Posterior vena cava (tissue), 2 donors: ENCODE measurements at regions of chr13 and their contacts with region 1.

Region 1: GRCh38 chr13:88637935-88638334 is 966.8 kb downstream of the SLITRK5 start:
- DNase-seq: no peak

Region 2: DNA sequence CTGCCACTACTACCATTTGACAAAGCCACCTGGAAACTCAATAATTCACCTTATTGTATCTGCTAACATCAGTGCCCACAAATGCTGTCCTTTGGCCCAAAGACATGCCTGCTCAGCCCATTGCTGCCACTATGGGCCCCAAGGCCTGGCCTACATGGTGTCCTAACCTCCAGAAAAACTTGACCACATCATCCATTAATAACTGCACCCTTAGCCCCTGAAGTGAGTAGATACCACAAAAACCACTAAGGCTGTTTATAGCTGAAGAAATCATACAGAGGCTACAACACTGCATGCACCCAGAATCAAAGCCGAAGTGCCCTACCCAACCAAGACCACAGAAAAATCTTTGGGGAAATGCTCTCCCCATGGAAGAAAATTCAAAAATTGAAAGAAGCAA is 1905.9 kb before region 1 on chr13:
- intact Hi-C with region 1: loop called in 1 of 2 experiments (anchors 5 kb)
- DNase-seq: no peak

Region 3: GRCh38 chr13:88565566-88565965 is 72.4 kb before region 1 on chr13:
- intact Hi-C with region 1: no loop called
- DNase-seq: no peak

Region 4: DNA sequence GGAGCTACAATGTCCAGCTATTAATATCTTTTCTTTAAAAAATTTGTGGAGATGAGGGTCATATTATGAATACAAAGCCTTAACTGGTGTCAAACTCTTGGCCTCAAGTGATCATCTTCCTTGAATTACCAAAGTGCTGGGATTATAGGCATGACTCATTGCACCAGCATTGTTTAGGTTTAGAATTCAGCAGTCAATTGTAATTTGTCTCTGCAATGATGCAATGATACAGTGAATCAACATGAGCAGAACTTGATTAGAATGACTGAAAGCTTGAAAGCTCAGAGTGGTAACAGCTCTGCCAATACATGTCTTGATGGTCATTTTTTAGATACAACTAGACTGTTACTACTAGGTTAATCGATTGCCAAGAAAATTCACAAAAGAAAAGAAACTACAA is 1956.8 kb after region 1 on chr13:
- intact Hi-C with region 1: no loop called
- DNase-seq: no peak